B cell (primary cell): ENCODE measurements at regions of chr16 and their contacts with region 1.

Region 1: GRCh38 chr16:56931892-56932720 is at the start of gene HERPUD1:
- DNase-seq: no peak
- ATAC-seq: peak; percentile 80
- H3K4me3 ChIP-seq: peak within 1 kb of the TSS; percentile 88 to 98 (median 95)
- H3K4me3 Mint-ChIP-seq: peak within 1 kb of the TSS; percentile 92
- H3K27ac ChIP-seq: peak within 1 kb of the TSS; percentile 98 to 99
- H3K27ac Mint-ChIP-seq: peak within 1 kb of the TSS; percentile 96
- H3K4me1 ChIP-seq: peaks cover 60 to 66% of the 10 kb centered on the region in 2 donors
- H3K4me1 Mint-ChIP-seq: peaks cover 55% of the 10 kb centered on the region
- H3K27me3 ChIP-seq: no peaks in the 10 kb centered on the region
- H3K27me3 Mint-ChIP-seq: no peaks in the 10 kb centered on the region
- CTCF ChIP-seq: no peak
- total RNA-seq, gene HERPUD1: 1,041 and 1,046 TPM in 2 replicates

Region 2: GRCh38 chr16:56425439-56425832 is 506.7 kb before region 1 on chr16 and contains the start of gene AMFR:
- CTCF ChIA-PET with region 1: no interaction called
- POLR2A ChIA-PET with region 1: no interaction called
- intact Hi-C with region 1: loop called (anchors 5 kb)
- DNase-seq: peak; percentile 90
- ATAC-seq: peak; percentile 88
- H3K4me3 ChIP-seq: peak within 1 kb of the TSS; percentile 69 to 78 (median 70)
- H3K4me3 Mint-ChIP-seq: peak within 1 kb of the TSS; percentile 98
- H3K27ac ChIP-seq: peak within 1 kb of the TSS; percentile 72 to 81
- H3K27ac Mint-ChIP-seq: peak within 1 kb of the TSS; percentile 97
- H3K4me1 ChIP-seq: peaks cover 32 to 36% of the 10 kb centered on the region in 2 donors
- H3K4me1 Mint-ChIP-seq: peaks cover 34% of the 10 kb centered on the region
- H3K27me3 ChIP-seq: no peaks in the 10 kb centered on the region
- H3K27me3 Mint-ChIP-seq: no peaks in the 10 kb centered on the region
- CTCF ChIP-seq: peak; percentile 62
- total RNA-seq, gene AMFR: 225 and 234 TPM in 2 replicates

Region 3: GRCh38 chr16:56888806-56889205 is 43.3 kb before region 1 on chr16:
- CTCF ChIA-PET with region 1: interaction called, 10 read pairs
- POLR2A ChIA-PET with region 1: interaction called, 3 read pairs
- intact Hi-C with region 1: loop called (anchors 1 kb)
- DNase-seq: peak; percentile 87
- ATAC-seq: peak; percentile 96
- H3K4me3 ChIP-seq: no peak overlapping the region
- H3K4me3 Mint-ChIP-seq: peak overlapping the region; percentile 53
- H3K27ac ChIP-seq: peak overlapping the region in 1 of 2 donors; percentile 39
- H3K27ac Mint-ChIP-seq: peak overlapping the region; percentile 79
- H3K4me1 ChIP-seq: peaks cover 6 to 18% of the 10 kb centered on the region in 2 donors
- H3K4me1 Mint-ChIP-seq: peaks cover 18% of the 10 kb centered on the region
- H3K27me3 ChIP-seq: no peaks in the 10 kb centered on the region
- H3K27me3 Mint-ChIP-seq: no peaks in the 10 kb centered on the region
- CTCF ChIP-seq: no peak

Region 4: DNA sequence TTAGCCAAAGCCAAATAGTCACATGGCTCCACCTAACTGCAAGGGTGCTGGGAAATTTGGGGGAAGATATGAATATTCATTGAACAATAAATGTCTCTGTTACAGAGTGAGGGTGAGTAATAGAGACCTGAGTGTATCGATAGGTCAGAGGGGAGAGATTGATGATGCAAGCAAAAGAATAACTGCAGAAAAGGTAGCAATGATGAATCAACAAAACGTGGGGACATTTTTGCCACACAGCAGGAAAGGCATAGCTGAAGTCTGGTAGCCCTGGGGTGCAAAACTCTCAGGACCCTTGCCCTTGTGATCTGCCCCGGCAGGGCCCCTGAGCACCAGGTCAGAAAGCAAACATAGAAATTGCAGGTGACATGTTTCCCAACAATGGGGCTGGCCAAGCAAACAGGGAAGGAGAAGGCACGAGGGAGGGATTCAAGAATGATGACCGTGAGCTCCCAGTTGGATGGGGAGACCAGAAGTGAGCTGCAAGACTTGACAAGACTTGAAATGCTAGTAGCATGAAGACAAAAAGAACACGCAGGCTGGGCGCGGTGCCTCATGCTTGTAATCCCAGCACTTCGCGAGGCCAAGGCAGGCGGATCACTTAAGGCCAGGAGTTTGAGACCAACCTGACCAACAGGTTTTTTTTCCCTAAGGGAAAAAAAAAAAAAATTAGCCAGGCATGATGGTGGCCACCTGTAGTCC is 12.9 kb before region 1 on chr16:
- CTCF ChIA-PET with region 1: interaction called, 51 read pairs
- POLR2A ChIA-PET with region 1: interaction called, 108 read pairs
- intact Hi-C with region 1: loop called (anchors 1 kb)
- DNase-seq: no peak
- ATAC-seq: no peak
- H3K4me3 ChIP-seq: no peak overlapping the region
- H3K4me3 Mint-ChIP-seq: peak overlapping the region; percentile 28
- H3K27ac ChIP-seq: peak overlapping the region in 1 of 2 donors; percentile 100
- H3K27ac Mint-ChIP-seq: peak overlapping the region; percentile 38
- H3K4me1 ChIP-seq: peaks cover 53 to 69% of the 10 kb centered on the region in 2 donors
- H3K4me1 Mint-ChIP-seq: peaks cover 68% of the 10 kb centered on the region
- H3K27me3 ChIP-seq: no peaks in the 10 kb centered on the region
- H3K27me3 Mint-ChIP-seq: no peaks in the 10 kb centered on the region
- CTCF ChIP-seq: no peak

Region 5: DNA sequence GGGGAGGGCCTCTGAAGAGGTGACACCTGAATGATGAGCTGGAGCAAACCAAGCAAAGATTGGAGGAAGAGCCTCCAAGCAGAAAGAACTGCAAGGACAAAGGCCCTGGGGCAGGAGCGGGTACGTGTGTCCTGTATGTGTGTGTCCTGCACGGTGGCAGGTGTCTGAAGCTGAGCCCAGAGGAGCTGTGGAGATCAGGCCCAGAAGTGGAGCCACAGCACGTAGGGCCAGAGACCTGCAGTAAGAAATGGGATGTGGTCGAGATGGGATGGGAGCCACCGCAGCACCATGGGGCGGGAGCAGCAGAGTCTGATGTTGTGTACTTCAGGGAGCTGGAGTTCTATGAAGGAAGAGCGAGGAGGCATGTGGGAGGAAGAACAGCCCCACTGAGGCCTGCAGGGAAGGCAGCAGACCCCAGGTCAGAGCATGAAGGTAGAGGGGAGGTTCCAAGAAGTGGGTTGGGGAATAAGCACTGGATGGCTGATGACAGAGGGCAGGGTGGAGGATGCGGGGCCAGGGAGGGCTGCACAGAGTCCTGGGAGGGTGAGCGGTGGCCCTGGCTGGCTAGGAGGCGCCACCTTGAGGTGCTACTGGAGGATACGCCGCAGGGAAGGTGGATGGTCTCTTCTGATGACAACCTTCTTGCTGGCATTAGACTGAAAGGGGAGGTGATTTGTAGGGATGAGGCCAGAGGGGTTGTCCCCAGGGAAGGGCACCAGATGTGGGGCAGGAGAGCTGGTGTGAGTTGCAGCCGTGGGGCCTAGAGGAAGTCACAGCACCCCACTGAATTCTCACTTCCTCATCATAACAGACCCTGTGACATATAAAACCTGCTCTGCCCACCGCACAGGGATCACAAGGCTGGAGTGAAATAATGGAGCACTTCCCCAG is 19.0 kb after region 1 on chr16:
- CTCF ChIA-PET with region 1: interaction called, 7 read pairs
- POLR2A ChIA-PET with region 1: interaction called, 22 read pairs
- intact Hi-C with region 1: loop called (anchors 1 kb)
- DNase-seq: peak; percentile 92
- ATAC-seq: peak; percentile 84
- H3K4me3 ChIP-seq: peak overlapping the region in 1 of 5 experiments; percentile 1
- H3K4me3 Mint-ChIP-seq: peak overlapping the region; percentile 68
- H3K27ac ChIP-seq: peak overlapping the region; percentile 42 to 58
- H3K27ac Mint-ChIP-seq: peak overlapping the region; percentile 83
- H3K4me1 ChIP-seq: peaks cover 24 to 26% of the 10 kb centered on the region in 2 donors
- H3K4me1 Mint-ChIP-seq: peaks cover 41% of the 10 kb centered on the region
- H3K27me3 ChIP-seq: no peaks in the 10 kb centered on the region
- H3K27me3 Mint-ChIP-seq: no peaks in the 10 kb centered on the region
- CTCF ChIP-seq: peak; percentile 49

Region 6: DNA sequence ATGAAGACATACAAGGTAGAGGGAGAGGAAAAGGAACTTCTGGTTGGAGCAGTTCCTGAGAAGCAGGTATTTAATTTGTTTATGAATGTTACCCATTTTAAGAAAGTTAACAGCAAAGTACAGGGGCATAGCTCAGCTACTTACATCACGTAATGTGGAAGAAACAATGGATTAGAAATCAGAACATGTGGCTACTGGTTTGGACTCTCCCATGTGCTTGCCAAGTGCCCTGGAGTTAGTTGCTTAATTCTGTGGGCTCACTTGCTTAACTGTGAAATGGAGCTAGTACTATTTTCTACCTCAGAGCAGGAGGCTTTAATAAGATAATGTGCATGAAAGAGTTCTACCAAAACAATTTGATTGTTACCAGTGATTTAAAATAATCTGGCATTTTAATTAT is 281.4 kb after region 1 on chr16:
- CTCF ChIA-PET with region 1: no interaction called
- POLR2A ChIA-PET with region 1: no interaction called
- intact Hi-C with region 1: no loop called
- DNase-seq: no peak
- ATAC-seq: no peak
- H3K4me3 ChIP-seq: no peak overlapping the region
- H3K4me3 Mint-ChIP-seq: no peak overlapping the region
- H3K27ac ChIP-seq: no peak overlapping the region
- H3K27ac Mint-ChIP-seq: no peak overlapping the region
- H3K4me1 ChIP-seq: no peaks in the 10 kb centered on the region
- H3K4me1 Mint-ChIP-seq: no peaks in the 10 kb centered on the region
- H3K27me3 ChIP-seq: no peaks in the 10 kb centered on the region
- H3K27me3 Mint-ChIP-seq: no peaks in the 10 kb centered on the region
- CTCF ChIP-seq: no peak

Region 7: DNA sequence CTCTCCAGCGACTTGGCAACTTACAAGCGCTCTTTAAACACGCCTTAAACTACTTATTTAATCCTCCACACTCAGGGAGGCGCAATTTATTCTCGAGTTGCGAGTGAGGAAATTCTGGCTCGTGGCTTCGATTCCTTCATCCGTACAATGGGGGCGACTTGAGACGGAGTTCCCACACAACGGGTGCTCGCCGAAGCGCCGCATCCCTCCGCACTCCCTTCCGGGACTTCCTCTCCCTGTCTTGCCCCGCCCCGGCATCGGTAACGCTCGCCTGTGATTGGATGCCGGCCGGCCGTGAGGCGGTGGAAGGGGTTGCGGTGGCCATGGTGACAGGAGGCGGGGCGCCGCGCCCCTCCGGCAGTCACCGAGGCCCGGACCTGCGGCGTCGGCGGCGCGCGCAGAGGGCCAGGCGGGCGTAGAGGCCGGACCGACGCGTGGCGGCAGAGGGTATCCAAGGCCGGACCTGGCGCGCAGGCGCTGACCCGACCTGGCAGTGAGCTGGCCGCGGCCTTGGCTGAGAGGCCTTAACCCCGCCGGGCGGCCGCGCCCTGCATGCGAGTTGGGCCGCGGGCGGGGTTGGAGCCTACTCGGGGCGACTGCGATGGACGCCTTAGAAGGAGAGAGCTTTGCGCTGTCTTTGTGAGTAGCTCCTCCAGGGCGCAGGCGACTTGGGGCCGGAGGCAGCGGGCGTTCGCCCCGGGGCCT is 312.8 kb after region 1 on chr16 and contains the start of gene ARL2BP:
- CTCF ChIA-PET with region 1: no interaction called
- POLR2A ChIA-PET with region 1: no interaction called
- intact Hi-C with region 1: loop called (anchors 10 kb)
- DNase-seq: peak; percentile 96
- ATAC-seq: peak; percentile 95
- H3K4me3 ChIP-seq: peak within 1 kb of the TSS; percentile 74 to 85 (median 79)
- H3K4me3 Mint-ChIP-seq: peak within 1 kb of the TSS; percentile 99
- H3K27ac ChIP-seq: peak within 1 kb of the TSS; percentile 79 to 92
- H3K27ac Mint-ChIP-seq: peak within 1 kb of the TSS; percentile 96
- H3K4me1 ChIP-seq: peaks cover 26 to 33% of the 10 kb centered on the region in 2 donors
- H3K4me1 Mint-ChIP-seq: peaks cover 34% of the 10 kb centered on the region
- H3K27me3 ChIP-seq: no peaks in the 10 kb centered on the region
- H3K27me3 Mint-ChIP-seq: no peaks in the 10 kb centered on the region
- CTCF ChIP-seq: no peak
- total RNA-seq, gene ARL2BP: 36.8 and 38.8 TPM in 2 replicates